Mammary epithelial cell (primary cell): ENCODE measurements at regions of chr7 and their contacts with region 1.

Region 1: GRCh38 chr7:142098004-142098403 is 13.5 kb upstream of the MGAM2 start:
- DNase-seq: no peak
- H3K4me3 ChIP-seq: no peak overlapping the region
- H3K27ac ChIP-seq: no peak overlapping the region
- H3K4me1 ChIP-seq: peaks cover 5% of the 10 kb centered on the region
- H3K27me3 ChIP-seq: no peaks in the 10 kb centered on the region
- CTCF ChIP-seq: no peak

Region 2: DNA sequence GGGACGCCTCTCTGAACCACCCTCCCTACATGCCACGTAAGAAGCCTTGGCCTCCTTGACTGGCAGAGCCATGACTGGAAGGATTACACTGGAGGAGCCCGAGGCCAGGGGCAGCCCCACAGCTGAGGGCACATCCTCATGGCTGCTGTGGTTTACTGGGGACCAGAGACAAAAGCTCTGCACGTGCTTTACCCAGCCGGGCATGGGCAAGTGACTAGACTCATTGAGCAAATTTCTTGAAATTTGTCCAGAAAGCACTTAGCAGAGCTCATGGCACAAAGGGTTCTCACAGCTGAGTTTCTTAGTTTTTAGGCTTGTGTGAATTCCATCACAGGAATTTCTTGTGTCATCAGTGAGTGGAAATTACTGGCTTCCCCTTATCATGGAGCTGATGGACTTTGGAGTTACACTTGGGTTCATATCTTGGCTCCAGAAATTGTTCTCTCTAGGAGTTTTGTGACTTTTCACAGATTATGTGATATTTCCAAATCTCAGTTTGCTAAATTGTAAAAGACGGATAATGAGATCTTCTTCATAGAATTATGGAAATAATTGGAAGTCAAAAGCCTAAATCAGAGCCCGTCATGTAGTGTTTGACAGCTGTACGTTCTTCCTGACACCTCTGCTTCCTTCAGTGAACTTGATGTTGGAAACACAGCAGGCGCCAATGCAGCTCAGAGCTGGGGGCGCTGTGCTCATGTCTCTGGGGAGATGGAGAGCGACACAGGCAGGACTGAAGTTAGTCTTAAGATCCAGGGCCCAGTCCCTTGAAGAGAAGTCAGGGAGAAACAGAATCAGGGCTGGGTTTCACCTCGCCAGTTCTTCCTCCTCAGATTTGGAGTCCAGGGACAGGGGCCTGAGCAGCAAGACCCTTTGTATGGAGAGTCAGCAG is 34.2 kb before region 1 on chr7:
- CTCF ChIA-PET with region 1: interaction called, 3 read pairs
- dilution Hi-C with region 1: no loop called
- in situ Hi-C with region 1: no loop called
- intact Hi-C with region 1: loop called (anchors 1 kb)
- DNase-seq: no peak
- H3K4me3 ChIP-seq: no peak overlapping the region
- H3K27ac ChIP-seq: no peak overlapping the region
- H3K4me1 ChIP-seq: no peaks in the 10 kb centered on the region
- H3K27me3 ChIP-seq: no peaks in the 10 kb centered on the region
- CTCF ChIP-seq: no peak

Region 3: DNA sequence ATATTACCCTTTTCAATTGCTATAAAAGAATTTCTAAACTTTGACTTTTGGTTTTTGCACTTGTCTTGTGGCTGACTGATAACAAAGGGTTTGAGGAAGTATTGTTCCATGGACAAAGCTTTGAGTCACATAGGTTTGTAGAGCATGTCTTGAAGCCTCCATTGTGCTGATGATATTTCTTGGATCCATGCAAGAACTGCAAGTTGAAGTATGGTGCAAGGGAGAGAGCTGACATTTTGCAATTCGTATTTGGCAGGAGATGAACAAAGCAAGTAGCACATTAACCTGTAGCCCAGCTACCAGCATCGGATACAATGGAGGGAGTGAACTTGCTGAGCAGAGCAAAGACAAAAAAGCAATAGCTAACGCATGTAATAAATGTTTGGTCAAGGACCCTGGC is 36.9 kb after region 1 on chr7:
- CTCF ChIA-PET with region 1: no interaction called
- dilution Hi-C with region 1: loop called (anchors 5 kb)
- in situ Hi-C with region 1: no loop called
- intact Hi-C with region 1: no loop called
- DNase-seq: no peak
- H3K4me3 ChIP-seq: no peak overlapping the region
- H3K27ac ChIP-seq: no peak overlapping the region
- H3K4me1 ChIP-seq: no peaks in the 10 kb centered on the region
- H3K27me3 ChIP-seq: no peaks in the 10 kb centered on the region
- CTCF ChIP-seq: no peak

Region 4: GRCh38 chr7:142196066-142196840 is 98.2 kb after region 1 on chr7:
- CTCF ChIA-PET with region 1: no interaction called
- dilution Hi-C with region 1: no loop called
- in situ Hi-C with region 1: no loop called
- intact Hi-C with region 1: no loop called
- DNase-seq: peak; percentile 66
- H3K4me3 ChIP-seq: no peak overlapping the region
- H3K27ac ChIP-seq: no peak overlapping the region
- H3K4me1 ChIP-seq: no peaks in the 10 kb centered on the region
- H3K27me3 ChIP-seq: no peaks in the 10 kb centered on the region
- CTCF ChIP-seq: no peak

Region 5: GRCh38 chr7:142323706-142324105 is 225.7 kb after region 1 on chr7:
- CTCF ChIA-PET with region 1: interaction called, 11 read pairs
- dilution Hi-C with region 1: no loop called
- in situ Hi-C with region 1: no loop called
- intact Hi-C with region 1: no loop called
- DNase-seq: peak; percentile 9
- H3K4me3 ChIP-seq: no peak overlapping the region
- H3K27ac ChIP-seq: no peak overlapping the region
- H3K4me1 ChIP-seq: peaks cover 6% of the 10 kb centered on the region
- H3K27me3 ChIP-seq: no peaks in the 10 kb centered on the region
- CTCF ChIP-seq: peak; percentile 59 to 72